ENCODE measurements at regions of chr4 and their contacts with region 1.

Region 1: DNA sequence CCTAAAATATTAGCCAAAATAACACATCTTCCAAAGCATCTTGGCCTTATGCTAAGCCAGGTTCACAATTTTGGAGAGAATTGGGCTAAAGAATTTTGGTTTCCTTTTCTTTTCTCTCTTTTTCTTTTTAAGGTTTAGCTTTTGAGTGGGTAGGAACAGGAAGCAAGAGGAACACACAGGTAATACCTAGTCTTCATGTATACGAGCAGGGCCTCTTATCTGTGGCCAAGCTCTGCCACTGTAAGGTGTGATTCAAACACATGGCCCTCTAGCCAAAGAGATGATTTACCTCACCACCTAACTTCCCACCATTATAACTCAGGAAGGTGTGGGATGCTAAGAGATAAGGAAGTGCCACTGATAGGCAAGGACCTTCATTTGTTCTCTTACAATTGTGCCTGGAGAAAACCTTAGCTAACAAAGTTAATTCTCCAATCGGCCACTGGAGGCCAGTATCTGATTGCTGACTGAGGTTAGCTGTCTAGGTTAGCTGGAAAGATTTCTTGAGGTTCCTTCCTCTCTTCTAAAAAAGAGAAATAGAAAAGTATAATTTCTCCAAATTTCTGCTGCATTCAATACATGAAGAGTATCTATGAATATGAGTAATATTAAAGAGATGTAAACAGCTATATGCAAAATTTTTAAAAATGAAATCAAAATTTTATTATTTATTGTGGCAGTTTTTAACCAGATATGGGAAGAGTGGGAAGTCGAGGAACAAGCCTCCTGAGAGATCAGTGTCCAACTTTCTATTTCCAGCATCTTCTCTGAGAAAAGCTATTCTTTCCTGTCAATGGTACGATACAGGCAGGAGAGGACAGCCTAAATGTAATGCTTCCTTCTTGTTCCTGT is 30.1 kb upstream of the BBS7 start:
- DNase-seq: peak; percentile 49
- ATAC-seq: peak; percentile 89
- H3K4me3 Mint-ChIP-seq: no peak overlapping the region
- H3K27ac Mint-ChIP-seq: no peak overlapping the region
- H3K4me1 Mint-ChIP-seq: no peaks in the 10 kb centered on the region
- H3K27me3 Mint-ChIP-seq: no peaks in the 10 kb centered on the region
- CTCF ChIP-seq: peak; percentile 56

Region 2: DNA sequence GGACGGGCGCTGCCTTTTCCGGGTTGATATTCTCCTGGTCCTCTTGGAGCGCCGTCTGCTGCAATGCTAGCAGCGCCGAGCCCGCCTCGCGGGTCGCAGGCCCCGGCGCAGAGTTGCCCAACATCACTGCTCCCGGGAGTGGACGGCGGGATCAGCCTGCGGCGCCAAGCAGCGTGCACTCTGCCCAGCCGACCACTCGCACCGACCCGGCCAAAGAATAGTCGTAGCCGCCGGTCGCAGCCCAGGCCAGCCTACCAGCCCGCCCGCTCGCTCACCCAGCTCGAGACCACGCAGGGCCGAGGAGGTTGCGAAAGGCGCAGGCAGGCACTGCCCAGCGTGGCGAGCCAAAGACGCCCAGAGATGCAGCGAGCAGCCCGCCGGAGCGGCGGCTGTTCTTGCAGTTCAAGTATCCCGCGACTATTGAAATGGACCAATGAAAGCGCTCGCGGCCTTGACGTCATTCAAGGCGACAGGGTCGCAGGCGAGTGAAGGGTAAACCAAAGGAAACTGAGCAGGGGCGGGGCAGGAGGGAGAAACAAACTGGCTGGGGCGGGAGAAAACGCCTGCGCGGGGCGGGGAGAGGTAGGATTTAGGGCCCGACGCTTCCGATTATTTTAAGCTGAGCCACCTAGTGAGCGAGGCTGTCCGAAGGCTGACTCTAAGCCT is 76.7 kb before region 1 on chr4 and contains the start of gene CCNA2:
- CTCF ChIA-PET with region 1: no interaction called
- POLR2A ChIA-PET with region 1: no interaction called
- DNase-seq: peak; percentile 98
- ATAC-seq: peak; percentile 93
- H3K4me3 Mint-ChIP-seq: peak within 1 kb of the TSS; percentile 98
- H3K27ac Mint-ChIP-seq: peak within 1 kb of the TSS; percentile 89
- H3K4me1 Mint-ChIP-seq: peaks cover 9% of the 10 kb centered on the region
- H3K27me3 Mint-ChIP-seq: no peaks in the 10 kb centered on the region; the same call in 1 of the 2 replicates
- CTCF ChIP-seq: no peak
- total RNA-seq, gene CCNA2: 77.1 to 95.1 TPM (median 81.1 TPM) in 3 replicates

Region 3: GRCh38 chr4:121885115-121885514 is 15.2 kb before region 1 on chr4:
- CTCF ChIA-PET with region 1: no interaction called
- POLR2A ChIA-PET with region 1: no interaction called
- DNase-seq: no peak
- ATAC-seq: no peak
- H3K4me3 Mint-ChIP-seq: no peak overlapping the region
- H3K27ac Mint-ChIP-seq: no peak overlapping the region
- H3K4me1 Mint-ChIP-seq: 0 out of 2 replicates have a peak, but pooled peaks cover 4% of the 10 kb centered on the region
- H3K27me3 Mint-ChIP-seq: no peaks in the 10 kb centered on the region
- CTCF ChIP-seq: no peak

Region 4: GRCh38 chr4:122003335-122003734 is 103.0 kb after region 1 on chr4:
- CTCF ChIA-PET with region 1: interaction called, 15 read pairs
- POLR2A ChIA-PET with region 1: no interaction called
- DNase-seq: peak; percentile 58
- ATAC-seq: peak; percentile 99
- H3K4me3 Mint-ChIP-seq: no peak overlapping the region
- H3K27ac Mint-ChIP-seq: no peak overlapping the region
- H3K4me1 Mint-ChIP-seq: no peaks in the 10 kb centered on the region
- H3K27me3 Mint-ChIP-seq: no peaks in the 10 kb centered on the region
- CTCF ChIP-seq: peak; percentile 57

Region 5: DNA sequence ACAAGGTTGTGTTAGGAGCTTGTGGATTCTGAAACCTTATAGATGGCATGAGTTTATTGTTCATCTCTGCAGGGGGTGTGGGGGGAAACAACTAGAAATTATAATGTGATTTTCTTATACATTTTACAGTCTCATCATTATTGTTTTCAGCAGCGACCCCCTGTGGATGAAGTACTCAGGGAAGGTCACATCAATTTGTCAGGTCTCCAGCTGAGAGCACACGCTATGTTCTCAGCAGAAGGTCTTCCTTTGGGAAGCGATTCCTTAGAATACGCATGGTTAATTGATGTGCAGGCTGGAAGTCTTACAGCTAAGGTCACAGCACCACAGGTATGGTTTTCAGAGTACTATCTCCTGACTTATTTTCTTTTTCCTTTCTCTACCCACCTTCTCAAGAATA is 324.0 kb after region 1 on chr4:
- CTCF ChIA-PET with region 1: interaction called, 12 read pairs
- POLR2A ChIA-PET with region 1: no interaction called
- DNase-seq: peak; percentile 11
- ATAC-seq: peak; percentile 74
- H3K4me3 Mint-ChIP-seq: no peak overlapping the region
- H3K27ac Mint-ChIP-seq: no peak overlapping the region
- H3K4me1 Mint-ChIP-seq: peaks cover 10% of the 10 kb centered on the region
- H3K27me3 Mint-ChIP-seq: no peaks in the 10 kb centered on the region
- CTCF ChIP-seq: no peak

Region 6: GRCh38 chr4:122577808-122578781 is 677.7 kb after region 1 on chr4:
- CTCF ChIA-PET with region 1: interaction called, 20 read pairs
- POLR2A ChIA-PET with region 1: no interaction called
- DNase-seq: peak; percentile 63
- ATAC-seq: peak; percentile 84
- H3K4me3 Mint-ChIP-seq: no peak overlapping the region
- H3K27ac Mint-ChIP-seq: no peak overlapping the region
- H3K4me1 Mint-ChIP-seq: no peaks in the 10 kb centered on the region
- H3K27me3 Mint-ChIP-seq: peaks cover 11% of the 10 kb centered on the region; the same call in 1 of the 2 replicates
- CTCF ChIP-seq: peak; percentile 58